GM10248 (cell line): ENCODE measurements at regions of chr21 and their contacts with region 1.

Region 1: GRCh38 chr21:17585875-17586450 is 26.7 kb downstream of the BTG3 start:
- DNase-seq: peak; percentile 18
- CTCF ChIP-seq: peak; percentile 42

Region 2: GRCh38 chr21:17387030-17387617 is 198.8 kb before region 1 on chr21:
- CTCF ChIA-PET with region 1: interaction called, 19 read pairs
- POLR2A ChIA-PET with region 1: no interaction called
- DNase-seq: peak; percentile 46
- CTCF ChIP-seq: peak; percentile 72